Left ventricle myocardium inferior (tissue), 1 donor: ENCODE measurements at regions of chr19 and their contacts with region 1.

Region 1: DNA sequence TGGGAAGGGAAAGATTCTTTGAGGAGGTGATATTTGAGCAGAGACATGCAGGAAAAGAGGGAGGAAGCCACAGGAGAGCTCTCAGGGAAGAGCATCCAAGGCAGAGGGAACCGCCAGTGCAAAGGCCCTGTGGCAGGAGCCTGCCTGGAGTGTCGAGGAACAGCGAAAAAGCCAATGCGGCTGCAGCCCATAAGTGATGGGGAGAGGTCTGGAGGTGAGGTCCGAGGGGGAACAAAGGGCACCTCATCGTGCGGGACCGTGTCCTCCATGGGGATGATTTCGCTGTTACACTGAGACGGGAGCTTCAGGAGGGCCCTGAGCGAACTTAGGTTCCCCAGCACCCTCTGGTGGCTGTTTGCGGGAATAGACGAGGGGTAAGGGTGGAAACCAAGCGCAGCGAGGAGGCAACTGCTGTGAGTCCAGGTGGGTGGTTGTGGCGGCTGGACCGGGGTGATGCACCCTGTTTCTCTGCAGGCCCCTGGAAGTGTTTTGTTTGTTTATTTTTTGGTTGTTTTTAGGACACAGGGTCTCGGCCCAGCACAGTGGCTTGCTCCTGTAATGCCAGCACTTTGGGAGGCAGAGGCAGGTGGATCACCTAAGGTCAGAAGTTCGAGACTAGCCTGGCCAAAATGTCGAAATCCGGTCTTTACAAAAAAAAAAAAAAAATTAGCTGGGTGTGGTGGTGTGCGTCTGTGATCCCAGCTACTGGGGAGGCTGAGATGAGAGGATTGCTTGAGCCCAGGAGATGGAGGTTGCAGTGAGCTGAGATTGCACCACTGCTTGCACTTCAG is 5.9 kb upstream of the EHD2 start:
- DNase-seq: peak; percentile 66
- H3K4me3 ChIP-seq: no peak overlapping the region
- H3K27ac ChIP-seq: no peak overlapping the region
- H3K4me1 ChIP-seq: no peaks in the 10 kb centered on the region
- H3K27me3 ChIP-seq: peaks cover 8% of the 10 kb centered on the region
- CTCF ChIP-seq: peak; percentile 86

Region 2: GRCh38 chr19:47296036-47296435 is 411.3 kb before region 1 on chr19:
- intact Hi-C with region 1: no loop called
- DNase-seq: no peak
- H3K4me3 ChIP-seq: no peak overlapping the region
- H3K27ac ChIP-seq: no peak overlapping the region
- H3K4me1 ChIP-seq: no peaks in the 10 kb centered on the region
- H3K27me3 ChIP-seq: no peaks in the 10 kb centered on the region
- CTCF ChIP-seq: peak; percentile 79

Region 3: GRCh38 chr19:47436712-47437401 is 270.5 kb before region 1 on chr19:
- intact Hi-C with region 1: loop called (anchors 2 kb)
- DNase-seq: peak; percentile 68
- H3K4me3 ChIP-seq: no peak overlapping the region
- H3K27ac ChIP-seq: no peak overlapping the region
- H3K4me1 ChIP-seq: peaks cover 6% of the 10 kb centered on the region
- H3K27me3 ChIP-seq: peaks cover 88% of the 10 kb centered on the region
- CTCF ChIP-seq: peak; percentile 91

Region 4: GRCh38 chr19:47561440-47562057 is 145.8 kb before region 1 on chr19:
- intact Hi-C with region 1: no loop called
- DNase-seq: no peak
- H3K4me3 ChIP-seq: no peak overlapping the region
- H3K27ac ChIP-seq: no peak overlapping the region
- H3K4me1 ChIP-seq: no peaks in the 10 kb centered on the region
- H3K27me3 ChIP-seq: no peaks in the 10 kb centered on the region
- CTCF ChIP-seq: no peak

Region 5: DNA sequence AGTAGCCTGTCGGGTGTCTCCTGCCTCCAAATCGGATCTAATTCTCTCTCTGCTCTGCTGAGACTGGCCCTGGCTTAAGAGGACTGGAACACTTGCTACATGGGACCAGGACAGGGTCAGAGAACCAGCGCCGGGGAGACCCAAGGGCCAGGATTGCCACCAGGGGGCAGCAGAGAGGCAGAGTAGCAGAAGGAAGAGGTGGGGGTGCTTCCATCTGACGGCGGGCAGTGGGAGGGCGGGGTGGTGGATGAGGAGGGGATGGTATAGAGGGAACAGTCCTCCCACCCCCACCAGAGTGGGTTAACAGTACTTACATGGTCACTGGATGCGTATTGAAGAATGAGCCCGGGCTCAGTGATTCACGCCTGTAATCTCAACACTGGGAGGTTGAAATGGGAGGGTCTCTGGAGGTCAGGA is 83.1 kb after region 1 on chr19:
- intact Hi-C with region 1: loop called (anchors 5 kb)
- DNase-seq: peak; percentile 80
- H3K4me3 ChIP-seq: no peak overlapping the region
- H3K27ac ChIP-seq: no peak overlapping the region
- H3K4me1 ChIP-seq: peaks cover 8% of the 10 kb centered on the region
- H3K27me3 ChIP-seq: no peaks in the 10 kb centered on the region
- CTCF ChIP-seq: peak; percentile 85